Left cardiac atrium (tissue), 4 donors: ENCODE measurements at regions of chr1 and their contacts with region 1.

Region 1: GRCh38 chr1:150798525-150798924 is 9.5 kb downstream of the CTSK start:
- DNase-seq: no peak
- ATAC-seq: no peak

Region 2: GRCh38 chr1:150906341-150906740 is 107.8 kb after region 1 on chr1:
- intact Hi-C with region 1: loop called in 1 of 2 experiments (anchors 10 kb)
- DNase-seq: no peak
- ATAC-seq: no peak